ENCODE measurements at regions of chr10 and their contacts with region 1.

Region 1: DNA sequence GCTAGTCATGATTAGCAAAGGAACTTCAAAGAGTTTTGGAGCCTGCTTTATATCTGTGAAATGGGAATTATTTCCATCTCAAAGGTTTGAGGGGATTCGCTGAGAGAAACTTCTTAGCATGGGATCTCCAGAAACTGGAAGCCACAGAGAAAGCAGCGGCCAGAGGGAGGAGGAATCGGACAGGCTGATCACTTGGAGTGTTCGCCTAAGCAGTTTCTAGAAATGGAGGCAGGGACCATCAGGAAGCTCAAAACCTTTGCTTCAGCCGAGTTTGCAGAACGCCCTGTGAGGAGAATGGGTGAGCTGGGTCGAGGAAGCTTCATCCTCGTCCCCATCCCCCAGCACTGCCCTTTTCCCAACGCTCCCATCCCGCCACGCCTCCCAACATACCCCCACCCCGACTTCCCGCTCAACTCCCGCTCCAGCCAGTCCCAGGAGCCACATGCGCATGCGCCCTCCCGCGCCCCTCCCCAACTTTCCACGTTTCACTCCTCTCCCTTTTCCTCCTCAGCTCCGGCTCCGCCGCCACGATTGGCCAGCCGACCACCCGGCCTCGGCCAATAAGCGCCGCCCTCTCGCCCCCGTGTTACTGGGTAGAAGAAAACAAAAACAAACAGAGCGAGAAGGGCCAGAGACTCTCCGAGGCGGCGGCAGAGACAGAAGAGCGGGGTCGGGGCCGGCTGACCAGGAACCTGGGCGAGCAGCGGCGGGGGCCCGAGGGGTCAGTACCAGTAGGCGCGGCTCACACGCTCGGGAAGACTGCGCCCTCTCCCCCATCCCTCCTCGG is at the start of gene PDCD4:
- DNase-seq: peak; percentile 96
- H3K4me3 Mint-ChIP-seq: peak within 1 kb of the TSS; percentile 93
- H3K27ac Mint-ChIP-seq: peak within 1 kb of the TSS; percentile 98
- H3K4me1 Mint-ChIP-seq: peaks cover 61% of the 10 kb centered on the region
- H3K27me3 Mint-ChIP-seq: no peaks in the 10 kb centered on the region
- total RNA-seq, gene PDCD4: 143 to 146 TPM

Region 2: DNA sequence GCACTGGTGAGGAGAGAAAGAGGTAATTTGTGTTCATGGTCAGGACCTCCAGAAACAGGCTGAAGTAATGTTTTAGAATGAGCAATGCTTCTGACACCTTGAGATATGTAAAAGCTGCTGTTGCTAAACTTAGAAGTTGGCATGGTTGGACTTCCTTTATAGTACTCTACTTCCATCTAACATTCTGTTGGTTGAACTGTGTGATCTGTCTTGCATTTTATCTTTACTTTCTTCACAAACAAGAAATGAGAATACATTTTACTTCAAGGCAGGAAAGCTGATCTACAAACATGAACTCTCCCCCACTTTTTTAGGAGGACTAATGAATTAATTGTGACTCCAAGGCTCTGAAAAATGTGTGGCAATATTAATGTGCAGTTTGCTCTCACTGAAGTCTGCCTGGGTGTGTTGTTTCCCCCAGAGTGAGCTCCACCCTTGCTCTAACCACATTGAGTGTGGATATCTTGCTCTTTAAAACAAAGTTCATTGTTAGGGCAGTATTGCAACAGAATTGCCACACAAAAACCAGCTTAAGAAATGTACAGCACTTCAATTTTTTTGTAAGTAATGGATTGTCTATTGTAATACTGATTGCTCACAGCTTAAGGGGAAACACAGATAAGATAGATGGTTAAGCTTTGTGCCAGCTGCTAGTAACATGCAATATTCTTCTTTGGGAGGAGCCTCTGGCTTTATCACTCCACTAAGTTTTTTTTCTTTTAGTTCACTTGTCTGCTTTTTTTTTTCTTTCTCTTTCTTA is 794.8 kb before region 1 on chr10:
- CTCF ChIA-PET with region 1: no interaction called
- intact Hi-C with region 1: loop called (anchors 10 kb)
- DNase-seq: no peak
- H3K4me3 Mint-ChIP-seq: peak overlapping the region; percentile 70
- H3K27ac Mint-ChIP-seq: peak overlapping the region; percentile 92
- H3K4me1 Mint-ChIP-seq: peaks cover 87% of the 10 kb centered on the region
- H3K27me3 Mint-ChIP-seq: no peaks in the 10 kb centered on the region

Region 3: DNA sequence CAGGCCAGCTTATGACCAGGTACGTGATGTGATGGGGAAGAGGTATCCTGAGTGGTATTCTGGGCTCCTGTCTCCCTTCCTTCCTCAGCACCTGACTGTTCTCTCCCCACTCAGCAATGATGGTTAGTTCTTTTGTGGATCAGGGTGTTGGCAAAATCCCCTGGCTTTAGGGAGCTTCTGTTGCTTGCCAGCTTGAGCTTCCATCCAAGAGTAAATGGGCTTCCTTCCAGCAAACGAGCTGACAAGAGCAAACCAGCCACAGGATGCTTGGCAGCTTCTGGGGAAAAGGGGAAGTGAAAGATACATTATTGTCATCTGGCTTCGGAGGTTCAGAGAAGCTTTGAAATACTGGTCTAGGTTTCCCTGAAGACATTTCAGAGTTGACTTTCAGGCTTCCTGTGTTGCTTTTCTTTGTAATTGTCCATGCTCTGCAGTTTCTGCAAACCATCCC is 368.6 kb before region 1 on chr10:
- CTCF ChIA-PET with region 1: no interaction called
- intact Hi-C with region 1: loop called (anchors 1 kb)
- DNase-seq: peak; percentile 66
- H3K4me3 Mint-ChIP-seq: peak overlapping the region; percentile 97
- H3K27ac Mint-ChIP-seq: peak overlapping the region; percentile 85
- H3K4me1 Mint-ChIP-seq: peaks cover 74% of the 10 kb centered on the region
- H3K27me3 Mint-ChIP-seq: no peaks in the 10 kb centered on the region

Region 4: DNA sequence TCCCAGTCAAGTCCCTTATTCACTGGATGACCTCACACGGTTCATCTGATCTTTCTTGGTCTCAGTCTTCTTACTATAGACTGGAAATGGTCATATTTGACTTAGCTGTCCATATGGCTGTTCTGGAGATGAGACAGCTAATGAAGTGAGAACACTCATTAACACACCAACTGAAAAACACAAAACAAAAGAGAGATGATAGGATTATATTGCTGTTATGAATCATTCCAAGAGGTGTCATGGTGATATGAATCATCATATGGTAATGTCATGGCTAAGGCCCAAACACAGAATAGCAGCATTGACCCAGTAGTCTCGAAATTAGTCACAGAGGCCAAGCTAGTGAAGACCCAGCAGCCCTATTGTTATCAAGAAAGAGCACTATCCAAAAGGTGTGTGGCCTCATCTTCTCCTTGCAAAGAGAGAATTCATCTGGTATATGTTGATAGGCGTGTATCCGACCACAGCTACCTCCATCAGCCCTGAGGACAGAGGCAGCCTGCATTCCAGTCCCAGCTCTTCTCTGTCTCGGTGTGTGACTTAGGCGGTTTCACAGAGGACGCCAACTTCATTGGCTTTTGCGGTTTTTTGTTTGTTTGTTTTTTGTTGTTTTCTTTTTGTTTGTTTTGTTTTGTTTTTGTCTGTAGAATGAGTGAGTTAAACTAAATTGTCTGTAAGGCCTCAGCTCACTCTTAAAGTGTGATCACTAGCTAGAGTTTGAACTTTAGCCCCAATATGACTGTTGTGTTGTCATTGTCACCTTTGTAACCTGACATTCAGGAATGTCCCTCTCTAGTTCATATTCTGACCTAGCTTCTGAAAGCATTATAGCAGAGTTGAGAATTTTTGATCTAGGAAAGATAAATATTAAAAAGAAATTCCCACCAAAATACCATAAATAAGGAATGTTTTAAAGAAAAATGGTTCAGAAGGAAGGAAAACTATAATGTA is 97.1 kb before region 1 on chr10:
- CTCF ChIA-PET with region 1: interaction called, 3 read pairs
- intact Hi-C with region 1: loop called (anchors 1 kb)
- DNase-seq: peak; percentile 66
- H3K4me3 Mint-ChIP-seq: no peak overlapping the region
- H3K27ac Mint-ChIP-seq: peak overlapping the region; percentile 77
- H3K4me1 Mint-ChIP-seq: peaks cover 47% of the 10 kb centered on the region
- H3K27me3 Mint-ChIP-seq: no peaks in the 10 kb centered on the region

Region 5: GRCh38 chr10:110883924-110884323 is 12.4 kb after region 1 on chr10:
- CTCF ChIA-PET with region 1: interaction called, 8 read pairs
- intact Hi-C with region 1: loop called (anchors 1 kb)
- DNase-seq: no peak
- H3K4me3 Mint-ChIP-seq: peak overlapping the region; percentile 11
- H3K27ac Mint-ChIP-seq: peak overlapping the region; percentile 39
- H3K4me1 Mint-ChIP-seq: peaks cover 70% of the 10 kb centered on the region
- H3K27me3 Mint-ChIP-seq: no peaks in the 10 kb centered on the region

Region 6: GRCh38 chr10:110918643-110919363 is 47.3 kb after region 1 on chr10 and contains the start of gene BBIP1:
- CTCF ChIA-PET with region 1: no interaction called
- intact Hi-C with region 1: loop called (anchors 1 kb)
- DNase-seq: no peak
- H3K4me3 Mint-ChIP-seq: peak within 1 kb of the TSS; percentile 97
- H3K27ac Mint-ChIP-seq: peak within 1 kb of the TSS; percentile 98
- H3K4me1 Mint-ChIP-seq: peaks cover 32% of the 10 kb centered on the region
- H3K27me3 Mint-ChIP-seq: no peaks in the 10 kb centered on the region
- total RNA-seq, gene BBIP1: 37.2 to 42.6 TPM

Region 7: GRCh38 chr10:111128331-111129180 is 257.1 kb after region 1 on chr10:
- CTCF ChIA-PET with region 1: no interaction called
- intact Hi-C with region 1: no loop called
- DNase-seq: no peak
- H3K4me3 Mint-ChIP-seq: no peak overlapping the region
- H3K27ac Mint-ChIP-seq: no peak overlapping the region
- H3K4me1 Mint-ChIP-seq: no peaks in the 10 kb centered on the region
- H3K27me3 Mint-ChIP-seq: peaks cover 2% of the 10 kb centered on the region